ENCODE measurements at regions of chr10 and their contacts with region 1.

Region 1: DNA sequence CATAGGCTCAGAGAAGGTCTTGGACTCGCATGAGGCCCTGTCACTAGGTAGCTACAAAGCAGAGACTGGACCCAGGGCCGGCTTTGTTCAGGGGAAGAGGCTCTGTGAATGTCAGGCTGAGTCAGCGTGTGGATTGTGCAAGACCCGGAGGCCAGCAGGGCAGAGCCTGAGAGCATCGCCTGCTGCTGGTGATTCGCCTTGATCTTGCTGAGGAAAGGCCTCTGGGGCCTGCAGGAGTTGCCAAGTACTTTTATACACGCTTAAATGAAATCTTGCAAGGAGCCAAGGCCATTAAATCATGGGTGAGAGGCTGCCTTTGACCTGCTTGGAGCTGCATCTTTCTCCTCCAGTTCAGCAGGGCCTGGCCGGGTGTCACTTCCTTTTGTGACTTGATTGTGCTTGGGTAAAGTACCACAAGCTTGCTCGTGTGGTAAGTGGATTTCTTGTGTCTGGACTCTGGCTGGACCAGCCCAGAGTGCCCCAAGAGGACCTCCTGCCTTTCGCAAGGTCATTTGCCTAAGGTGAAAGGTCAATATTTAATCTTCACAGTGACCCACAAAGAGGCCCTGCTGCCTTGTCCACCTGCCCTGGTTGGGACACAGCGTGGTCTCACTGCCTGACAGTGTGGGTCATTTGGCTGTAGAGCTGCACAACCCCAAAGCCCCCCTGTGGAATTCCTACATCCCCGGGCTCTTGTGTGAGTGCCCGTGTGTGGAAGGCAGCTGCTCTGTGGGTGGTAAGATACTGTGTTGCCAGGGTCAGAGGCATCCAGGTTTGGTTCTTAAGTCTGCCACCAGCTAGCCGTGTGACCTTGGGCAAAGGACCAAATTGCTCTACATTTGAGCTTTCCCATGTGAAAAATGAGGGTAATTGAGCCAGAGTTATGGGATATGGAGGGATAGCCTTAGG is 38.6 kb upstream of the SH2D4B start:
- DNase-seq: peak; percentile 75 to 92 (median 90)
- H3K4me3 ChIP-seq: peak overlapping the region in 3 of 7 experiments; percentile 15 to 38 (median 20)
- H3K27ac ChIP-seq: peak overlapping the region; percentile 42 to 73
- H3K4me1 ChIP-seq: peaks cover 21 to 90% (median 64%) of the 10 kb centered on the region in 4 experiments
- H3K27me3 ChIP-seq: no peaks in the 10 kb centered on the region

Region 2: DNA sequence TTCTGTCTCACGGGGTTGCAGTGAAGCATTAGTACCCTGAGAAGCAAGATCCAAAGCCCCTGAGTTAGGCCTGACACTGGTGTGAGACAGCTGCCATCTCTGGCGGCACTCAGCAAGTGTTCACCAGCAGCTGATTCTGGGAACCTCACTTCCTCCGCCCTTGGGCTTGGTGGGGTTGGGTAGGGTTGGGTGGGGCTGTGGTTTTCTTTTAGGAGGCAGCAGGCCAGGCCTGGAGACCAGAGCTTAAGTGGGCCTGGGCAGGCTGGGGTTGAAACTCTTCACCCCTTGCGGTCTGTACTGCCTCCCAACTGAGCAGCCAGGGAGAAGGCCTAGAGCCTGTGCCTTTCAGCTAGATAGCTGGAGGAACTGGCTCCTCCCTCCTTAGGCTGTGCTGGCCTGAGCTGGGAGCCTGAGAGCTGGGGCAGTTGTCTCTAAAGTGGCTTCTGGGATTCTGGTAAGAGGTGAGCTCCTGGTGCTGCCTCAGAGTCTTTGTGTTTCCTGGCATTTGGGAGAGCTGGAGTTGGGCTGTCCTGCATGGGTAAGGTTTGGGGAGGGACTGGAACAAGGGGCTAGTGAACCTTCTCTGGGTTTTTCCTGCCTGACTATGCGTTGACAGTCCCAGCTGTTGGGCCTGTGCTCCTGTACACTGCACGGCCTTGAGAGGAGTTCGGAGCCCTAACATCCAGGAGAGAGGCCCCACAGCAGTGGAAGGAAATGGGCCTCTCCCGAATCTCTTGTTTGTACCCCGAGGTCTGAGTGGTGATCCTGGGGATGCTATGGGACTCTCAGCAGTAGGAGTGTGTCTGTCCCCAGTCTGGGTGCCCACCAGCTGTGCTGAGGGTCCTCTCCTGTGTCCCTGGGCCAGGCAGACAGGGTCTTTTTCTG is 39.8 kb before region 1 on chr10:
- CTCF ChIA-PET with region 1: interaction called, 34 read pairs
- POLR2A ChIA-PET with region 1: interaction called, 3 read pairs
- DNase-seq: peak; percentile 68 to 89 (median 85)
- H3K4me3 ChIP-seq: peak overlapping the region in 4 of 7 experiments; percentile 2 to 51 (median 24)
- H3K27ac ChIP-seq: peak overlapping the region in 1 of 2 experiments; percentile 71
- H3K4me1 ChIP-seq: peaks cover 21 to 88% (median 80%) of the 10 kb centered on the region in 4 experiments
- H3K27me3 ChIP-seq: no peaks in the 10 kb centered on the region

Region 3: DNA sequence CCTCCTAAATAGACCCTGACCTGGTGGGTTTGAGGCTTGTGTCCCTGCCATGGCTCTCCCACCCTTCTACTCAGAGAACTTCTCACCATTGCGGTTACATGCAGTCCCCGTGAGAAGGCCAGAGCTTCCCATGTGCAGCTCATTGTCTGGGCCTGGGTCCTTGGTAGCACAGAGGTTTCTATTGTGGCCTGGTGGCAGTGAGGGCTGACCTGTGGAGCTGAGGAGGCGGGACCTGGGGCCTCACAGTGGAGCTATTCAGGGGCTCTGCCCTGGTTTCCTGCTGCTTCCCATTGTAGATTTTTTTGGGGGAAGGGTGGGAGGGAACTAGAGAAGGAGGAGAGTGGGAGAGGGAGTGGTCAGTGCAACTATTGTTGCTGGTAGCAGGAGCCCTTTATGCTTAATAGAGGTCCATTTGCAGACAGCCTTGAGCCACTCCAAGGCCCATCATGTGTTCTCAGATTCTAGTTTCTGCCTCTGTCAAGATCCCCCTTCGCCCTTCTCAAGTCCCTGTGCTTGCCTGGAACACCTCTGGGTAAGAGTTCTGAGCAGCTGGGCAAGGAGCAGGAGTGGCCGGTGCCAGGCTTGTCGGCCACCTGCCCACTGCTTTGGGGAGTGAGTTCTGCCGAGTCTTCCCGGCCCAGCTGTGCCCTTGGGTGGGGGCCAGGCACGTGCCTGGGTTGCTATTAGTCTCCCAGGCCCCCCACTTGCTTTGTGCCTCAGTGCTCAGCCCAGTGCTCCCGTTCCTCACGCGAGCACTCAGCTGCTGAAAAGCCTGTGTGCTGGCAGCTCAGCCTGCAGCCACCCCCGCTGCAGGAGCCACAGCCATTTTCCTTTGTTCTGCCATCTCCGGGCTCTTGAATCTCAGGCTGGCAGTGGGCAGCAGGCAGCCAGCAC is 34.3 kb before region 1 on chr10:
- CTCF ChIA-PET with region 1: interaction called, 43 read pairs
- POLR2A ChIA-PET with region 1: no interaction called
- DNase-seq: no peak
- H3K4me3 ChIP-seq: no peak overlapping the region
- H3K27ac ChIP-seq: peak overlapping the region in 1 of 2 experiments; percentile 50
- H3K4me1 ChIP-seq: peaks cover 28 to 91% (median 83%) of the 10 kb centered on the region in 4 experiments
- H3K27me3 ChIP-seq: no peaks in the 10 kb centered on the region

Region 4: DNA sequence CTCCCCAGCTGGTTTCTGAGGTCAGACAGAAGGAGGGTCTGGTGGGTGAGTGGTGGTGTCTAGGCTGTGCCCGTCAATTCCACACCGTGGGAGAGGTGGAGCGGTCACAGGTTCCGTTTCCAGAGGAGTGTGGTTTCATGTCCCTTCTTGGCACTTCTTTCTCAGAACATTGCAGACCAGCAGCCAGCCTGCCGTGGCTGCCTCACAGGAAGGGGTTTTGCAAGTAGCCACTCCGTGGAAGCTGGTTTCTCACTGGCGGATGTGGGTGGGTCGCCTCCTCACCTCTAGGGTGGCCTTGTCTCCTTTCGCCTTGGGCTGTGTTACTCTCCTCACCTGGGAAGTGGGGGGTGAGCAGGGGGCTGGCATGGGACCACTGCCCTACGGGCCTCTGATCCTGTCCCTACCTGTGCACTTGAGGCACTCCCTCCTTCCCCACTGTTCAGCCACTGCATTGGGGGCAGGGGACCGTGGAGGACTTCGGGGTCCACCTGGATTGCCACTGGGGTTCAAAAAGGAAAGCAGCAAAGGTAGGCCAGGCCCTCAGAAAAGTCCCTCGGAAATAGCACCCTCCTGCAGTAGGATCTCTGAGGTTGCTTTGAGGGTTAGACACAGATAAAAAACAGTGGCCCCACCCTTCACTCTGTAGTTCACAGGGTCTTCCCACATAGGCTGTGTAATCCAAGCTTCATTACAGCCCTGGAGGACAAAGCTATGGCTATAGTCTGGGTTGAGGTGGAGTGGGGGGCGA is 11.1 kb before region 1 on chr10:
- CTCF ChIA-PET with region 1: interaction called, 59 read pairs
- POLR2A ChIA-PET with region 1: no interaction called
- DNase-seq: peak; percentile 39 to 87 (median 81)
- H3K4me3 ChIP-seq: peak overlapping the region in 1 of 7 experiments; percentile 32
- H3K27ac ChIP-seq: peak overlapping the region in 1 of 2 experiments; percentile 54
- H3K4me1 ChIP-seq: peaks cover 22 to 69% (median 57%) of the 10 kb centered on the region in 4 experiments
- H3K27me3 ChIP-seq: no peaks in the 10 kb centered on the region

Region 5: GRCh38 chr10:80509403-80510161 is 10.5 kb after region 1 on chr10:
- CTCF ChIA-PET with region 1: interaction called, 28 read pairs
- POLR2A ChIA-PET with region 1: no interaction called
- DNase-seq: no peak
- H3K4me3 ChIP-seq: no peak overlapping the region
- H3K27ac ChIP-seq: no peak overlapping the region
- H3K4me1 ChIP-seq: peaks cover 0 to 13% (median 3%) of the 10 kb centered on the region in 4 experiments
- H3K27me3 ChIP-seq: no peaks in the 10 kb centered on the region

Region 6: DNA sequence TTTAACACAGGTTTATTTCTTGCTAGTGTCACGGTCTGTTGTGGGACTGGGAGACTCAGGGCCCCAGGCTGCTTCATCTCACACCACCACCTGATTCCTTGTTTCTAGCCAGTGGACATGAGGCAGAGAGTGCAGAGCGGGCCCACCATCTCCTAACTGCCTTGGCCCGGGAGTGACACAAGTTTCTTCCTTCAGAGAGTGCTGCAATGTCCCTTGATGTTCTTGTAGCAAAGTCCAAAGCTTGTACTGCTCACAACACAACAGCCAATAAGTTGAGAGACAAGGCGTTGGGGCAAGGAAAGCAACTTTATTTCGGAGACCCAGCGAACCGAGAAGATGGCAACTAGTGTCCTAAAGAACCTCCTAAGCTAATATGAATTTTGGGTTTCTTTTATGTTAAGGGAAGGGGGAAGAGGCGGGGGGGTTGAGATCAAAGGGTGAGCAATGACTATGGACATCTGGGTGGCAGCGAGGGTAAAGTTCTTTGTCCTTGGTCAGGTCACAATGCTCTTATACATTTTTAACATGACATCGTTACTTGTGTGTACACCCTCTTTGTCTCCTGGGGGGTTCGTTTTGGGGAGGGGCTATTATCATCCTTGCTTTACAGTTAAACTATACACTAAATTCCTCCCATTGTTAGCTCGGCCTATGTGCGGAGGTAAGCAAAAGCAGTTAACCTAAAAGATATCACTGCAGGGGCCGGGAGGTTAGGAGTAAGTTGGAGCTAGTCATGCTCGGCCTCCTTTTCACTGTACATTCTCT is 70.2 kb after region 1 on chr10:
- CTCF ChIA-PET with region 1: no interaction called
- POLR2A ChIA-PET with region 1: no interaction called
- DNase-seq: no peak
- H3K4me3 ChIP-seq: no peak overlapping the region
- H3K27ac ChIP-seq: no peak overlapping the region
- H3K4me1 ChIP-seq: no peaks in the 10 kb centered on the region
- H3K27me3 ChIP-seq: peaks cover 0 to 3% (median 0%) of the 10 kb centered on the region in 5 experiments

Region 7: GRCh38 chr10:80599424-80599847 is 100.3 kb after region 1 on chr10:
- CTCF ChIA-PET with region 1: no interaction called
- POLR2A ChIA-PET with region 1: no interaction called
- DNase-seq: peak; percentile 79 to 85 (median 81)
- H3K4me3 ChIP-seq: no peak overlapping the region
- H3K27ac ChIP-seq: no peak overlapping the region
- H3K4me1 ChIP-seq: peaks cover 0 to 19% (median 0%) of the 10 kb centered on the region in 4 experiments
- H3K27me3 ChIP-seq: no peaks in the 10 kb centered on the region